Heart right ventricle (tissue), 16 donors: ENCODE measurements at regions of chr7 and their contacts with region 1.

Region 1: DNA sequence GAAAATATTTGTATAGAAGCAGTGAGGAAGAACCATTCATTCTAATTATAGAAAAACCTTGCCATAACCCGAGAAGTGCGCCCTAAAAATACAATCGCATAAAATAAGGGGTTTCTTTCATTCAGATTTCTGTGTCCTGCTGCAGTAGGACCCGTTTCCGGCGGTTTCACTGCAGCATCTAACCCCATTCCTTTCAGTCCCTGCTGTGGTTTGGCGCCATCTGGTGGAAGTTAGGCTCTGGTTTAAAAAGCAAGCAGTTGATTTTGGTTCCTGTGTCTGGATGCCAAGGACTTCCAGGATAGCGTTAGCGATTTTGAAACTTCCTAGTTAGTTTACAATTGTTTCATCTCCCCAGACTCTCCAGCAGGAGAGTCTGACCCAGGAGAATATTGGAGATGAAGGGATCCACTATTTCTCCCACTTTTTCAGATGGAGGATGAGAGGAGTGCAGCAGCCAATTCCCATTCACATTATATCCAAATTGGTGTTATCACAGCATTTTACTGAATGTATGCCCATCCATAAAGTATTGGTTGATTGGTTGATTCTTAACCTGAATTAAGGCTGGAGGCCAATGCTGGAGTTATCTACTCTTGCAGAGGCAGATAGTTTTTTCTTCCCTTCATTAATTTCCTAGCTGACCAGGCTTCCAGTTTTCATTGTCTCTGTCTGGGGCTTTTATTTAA is 128.8 kb upstream of the CACNA2D1 start:
- DNase-seq: peak; percentile 75 to 88
- ATAC-seq: peak in 7 of 8 donors; percentile 74 to 88 (median 86)
- H3K4me3 ChIP-seq: peak overlapping the region in 2 of 10 donors; percentile 0 to 10
- H3K27ac ChIP-seq: no peak overlapping the region
- H3K4me1 ChIP-seq: peaks cover 0 to 8% (median 0%) of the 10 kb centered on the region in 9 donors
- H3K27me3 ChIP-seq: no peaks in the 10 kb centered on the region
- CTCF ChIP-seq: peak; percentile 72 to 94 (median 92)

Region 2: GRCh38 chr7:81482600-81483186 is 1089.6 kb before region 1 on chr7:
- intact Hi-C with region 1: loop called in 2 of 10 experiments (anchors 10 kb)
- DNase-seq: no peak
- ATAC-seq: no peak
- H3K4me3 ChIP-seq: no peak overlapping the region
- H3K27ac ChIP-seq: peak overlapping the region in 1 of 10 donors; percentile 2
- H3K4me1 ChIP-seq: peaks cover 0 to 22% (median 5%) of the 10 kb centered on the region in 9 donors
- H3K27me3 ChIP-seq: no peaks in the 10 kb centered on the region
- CTCF ChIP-seq: peak; percentile 34 to 82 (median 67)

Region 3: GRCh38 chr7:82164813-82165212 is 407.5 kb before region 1 on chr7:
- intact Hi-C with region 1: loop called in 2 of 10 experiments (anchors 10 kb)
- DNase-seq: peak in 1 of 2 donors; percentile 35
- ATAC-seq: peak in 7 of 8 donors; percentile 51 to 77 (median 72)
- H3K4me3 ChIP-seq: no peak overlapping the region
- H3K27ac ChIP-seq: peak overlapping the region in 1 of 10 donors; percentile 8
- H3K4me1 ChIP-seq: peaks cover 0 to 23% (median 5%) of the 10 kb centered on the region in 9 donors
- H3K27me3 ChIP-seq: no peaks in the 10 kb centered on the region
- CTCF ChIP-seq: peak in 6 of 9 donors; percentile 37 to 60 (median 46)

Region 4: DNA sequence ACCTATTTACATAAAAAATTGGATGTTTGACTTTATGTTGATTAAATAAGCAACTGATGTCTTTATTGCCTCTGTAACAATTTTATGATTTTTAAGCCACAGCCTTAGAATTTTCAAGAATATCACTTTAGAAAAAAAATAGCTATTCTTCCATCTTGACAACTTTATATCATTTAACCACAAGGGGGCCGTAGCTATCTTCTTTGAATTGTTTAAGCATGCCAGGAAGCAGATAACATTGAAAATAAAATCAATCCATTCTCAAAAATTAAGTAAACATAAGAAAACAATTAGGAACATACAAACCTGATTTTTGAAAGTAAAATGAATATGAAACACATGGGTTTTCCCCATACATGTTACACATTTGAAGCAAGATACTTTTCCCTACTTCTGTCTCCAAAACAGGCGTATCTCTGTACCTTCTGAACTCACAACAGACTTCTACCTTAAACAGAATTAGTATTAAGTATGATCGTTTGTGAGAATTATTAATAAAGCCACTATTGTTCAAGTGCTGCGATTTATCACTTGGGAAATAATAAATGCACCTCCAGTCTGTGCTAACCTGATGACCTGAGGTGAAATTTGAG is 337.8 kb before region 1 on chr7:
- intact Hi-C with region 1: loop called in 5 of 10 experiments (anchors 2 to 10 kb)
- DNase-seq: no peak
- ATAC-seq: peak in 2 of 8 donors; percentile 24 to 38
- H3K4me3 ChIP-seq: no peak overlapping the region
- H3K27ac ChIP-seq: peak overlapping the region in 1 of 10 donors; percentile 28
- H3K4me1 ChIP-seq: peaks cover 0 to 30% (median 11%) of the 10 kb centered on the region in 9 donors
- H3K27me3 ChIP-seq: no peaks in the 10 kb centered on the region
- CTCF ChIP-seq: peak; percentile 46 to 74 (median 55)

Region 5: DNA sequence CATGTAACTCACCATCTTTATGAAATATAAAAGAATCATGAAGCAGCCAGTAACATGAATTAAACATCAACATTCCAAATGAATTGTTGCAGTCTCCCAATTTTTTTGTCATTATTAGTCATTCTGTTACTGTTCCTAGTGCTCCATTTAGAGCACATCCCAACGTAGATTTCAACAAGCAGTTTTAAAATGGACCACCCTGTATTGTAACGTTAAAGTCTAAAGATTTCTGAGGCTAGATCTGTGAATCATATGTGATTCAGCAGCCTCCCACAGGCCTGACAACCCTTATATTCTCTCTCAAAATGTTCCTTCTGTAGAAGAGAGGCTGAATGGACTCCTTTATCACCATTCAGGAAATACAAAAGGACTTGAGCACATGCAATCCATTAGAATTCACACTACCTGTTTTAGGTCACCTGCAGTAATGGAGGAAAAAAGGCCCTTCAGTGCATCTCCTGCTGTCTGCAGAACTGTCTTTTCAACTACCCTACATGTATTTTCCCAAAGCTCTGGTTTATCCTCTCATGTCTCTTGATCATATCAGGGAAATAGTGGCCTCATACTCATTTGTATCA is 210.1 kb before region 1 on chr7:
- intact Hi-C with region 1: no loop called
- DNase-seq: no peak
- ATAC-seq: peak in 1 of 8 donors; percentile 20
- H3K4me3 ChIP-seq: no peak overlapping the region
- H3K27ac ChIP-seq: no peak overlapping the region
- H3K4me1 ChIP-seq: peaks cover 3 to 38% (median 15%) of the 10 kb centered on the region in 9 donors
- H3K27me3 ChIP-seq: no peaks in the 10 kb centered on the region
- CTCF ChIP-seq: no peak

Region 6: GRCh38 chr7:82449910-82450309 is 122.4 kb before region 1 on chr7:
- intact Hi-C with region 1: loop called in 3 of 10 experiments (anchors 5 to 10 kb)
- DNase-seq: no peak
- ATAC-seq: no peak
- H3K4me3 ChIP-seq: no peak overlapping the region
- H3K27ac ChIP-seq: no peak overlapping the region
- H3K4me1 ChIP-seq: no peaks in the 10 kb centered on the region
- H3K27me3 ChIP-seq: peaks cover 0 to 10% (median 0%) of the 10 kb centered on the region in 7 donors
- CTCF ChIP-seq: no peak

Region 7: DNA sequence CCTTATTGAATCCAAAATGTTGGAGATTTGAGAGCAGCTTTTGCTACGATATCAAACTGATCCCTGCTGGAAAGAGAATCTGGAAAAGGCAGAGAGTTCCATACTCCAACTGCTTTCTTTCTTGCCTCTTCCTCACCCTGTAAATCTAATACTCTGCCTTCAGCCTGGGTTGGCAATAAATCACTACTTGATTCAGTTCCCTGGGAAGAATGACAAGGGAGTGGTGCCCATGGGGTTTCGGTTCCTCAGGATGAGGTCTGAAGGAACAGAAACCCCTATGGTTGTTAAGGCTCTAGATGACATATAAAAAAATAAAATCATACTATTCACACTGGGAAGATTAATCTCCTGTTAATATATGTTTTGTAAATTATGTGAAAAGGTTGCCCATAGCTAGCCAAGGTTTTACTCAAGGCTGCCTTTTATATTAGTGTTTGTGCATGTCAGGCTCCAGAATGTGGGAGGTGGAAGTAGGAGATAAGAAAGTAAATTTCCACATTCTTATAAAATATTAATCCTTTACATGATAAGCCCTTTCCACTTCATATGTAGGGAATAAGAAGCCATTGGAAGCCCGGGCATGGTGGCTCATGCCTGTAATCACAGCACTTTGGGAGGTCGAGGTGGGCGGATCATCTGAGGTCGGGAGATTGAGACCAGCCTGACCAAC is 22.6 kb before region 1 on chr7:
- intact Hi-C with region 1: no loop called
- DNase-seq: no peak
- ATAC-seq: no peak
- H3K4me3 ChIP-seq: no peak overlapping the region
- H3K27ac ChIP-seq: no peak overlapping the region
- H3K4me1 ChIP-seq: no peaks in the 10 kb centered on the region
- H3K27me3 ChIP-seq: no peaks in the 10 kb centered on the region
- CTCF ChIP-seq: no peak

Region 8: DNA sequence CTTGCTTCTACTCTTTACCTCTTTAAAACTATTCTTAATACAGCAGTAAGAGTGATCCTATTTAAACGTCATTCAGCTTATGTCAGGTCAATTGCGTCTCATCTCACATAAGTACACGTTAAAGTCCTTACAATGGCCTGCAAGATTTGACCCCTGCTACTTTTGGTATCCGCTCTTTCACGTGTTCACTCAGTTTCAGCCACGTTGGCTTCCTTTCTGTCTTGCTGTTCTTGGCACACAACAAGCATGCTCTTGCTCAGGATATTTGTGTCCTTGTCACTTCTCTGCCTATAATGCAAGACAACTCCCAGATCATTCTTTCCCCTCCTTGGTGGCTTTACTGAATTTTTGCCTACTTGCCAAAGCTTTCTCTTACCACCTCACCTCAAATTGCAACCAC is 293.5 kb after region 1 on chr7:
- intact Hi-C with region 1: no loop called
- DNase-seq: no peak
- ATAC-seq: no peak
- H3K4me3 ChIP-seq: no peak overlapping the region
- H3K27ac ChIP-seq: no peak overlapping the region
- H3K4me1 ChIP-seq: no peaks in the 10 kb centered on the region
- H3K27me3 ChIP-seq: no peaks in the 10 kb centered on the region
- CTCF ChIP-seq: no peak